ENCODE measurements at regions of chr17 and their contacts with region 1.

Region 1: DNA sequence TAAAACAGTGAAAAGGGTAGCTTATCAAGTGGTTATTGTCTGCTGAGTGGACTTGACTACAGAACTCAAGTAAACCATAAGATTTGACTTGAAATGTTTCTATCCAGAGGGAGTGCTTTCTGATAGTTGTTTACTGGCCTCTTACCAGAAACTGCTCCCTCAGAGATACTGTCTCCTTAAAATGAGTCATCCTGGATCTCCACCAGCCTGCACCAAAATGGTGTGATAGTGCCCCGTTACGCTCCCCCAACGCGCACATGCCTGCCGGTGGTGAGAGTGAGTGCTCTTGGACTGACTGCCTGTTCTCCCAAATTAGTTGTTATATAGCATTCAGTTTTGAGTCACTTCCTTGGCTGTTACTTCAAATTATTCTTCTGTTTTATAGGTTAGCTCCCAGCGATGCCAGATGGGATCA is 22.9 kb downstream of the PRCD start:
- DNase-seq: peak; percentile 54
- H3K4me3 ChIP-seq: no peak overlapping the region
- CTCF ChIP-seq: no peak

Region 2: GRCh38 chr17:76511668-76512365 is 50.9 kb before region 1 on chr17:
- in situ Hi-C with region 1: loop called (anchors 5 kb)
- DNase-seq: no peak
- H3K4me3 ChIP-seq: no peak overlapping the region
- CTCF ChIP-seq: no peak

Measured in astrocyte of the cerebellum (primary cell).